MCF 10A (cell line): ENCODE measurements at regions of chr3 and their contacts with region 1.

Region 1: DNA sequence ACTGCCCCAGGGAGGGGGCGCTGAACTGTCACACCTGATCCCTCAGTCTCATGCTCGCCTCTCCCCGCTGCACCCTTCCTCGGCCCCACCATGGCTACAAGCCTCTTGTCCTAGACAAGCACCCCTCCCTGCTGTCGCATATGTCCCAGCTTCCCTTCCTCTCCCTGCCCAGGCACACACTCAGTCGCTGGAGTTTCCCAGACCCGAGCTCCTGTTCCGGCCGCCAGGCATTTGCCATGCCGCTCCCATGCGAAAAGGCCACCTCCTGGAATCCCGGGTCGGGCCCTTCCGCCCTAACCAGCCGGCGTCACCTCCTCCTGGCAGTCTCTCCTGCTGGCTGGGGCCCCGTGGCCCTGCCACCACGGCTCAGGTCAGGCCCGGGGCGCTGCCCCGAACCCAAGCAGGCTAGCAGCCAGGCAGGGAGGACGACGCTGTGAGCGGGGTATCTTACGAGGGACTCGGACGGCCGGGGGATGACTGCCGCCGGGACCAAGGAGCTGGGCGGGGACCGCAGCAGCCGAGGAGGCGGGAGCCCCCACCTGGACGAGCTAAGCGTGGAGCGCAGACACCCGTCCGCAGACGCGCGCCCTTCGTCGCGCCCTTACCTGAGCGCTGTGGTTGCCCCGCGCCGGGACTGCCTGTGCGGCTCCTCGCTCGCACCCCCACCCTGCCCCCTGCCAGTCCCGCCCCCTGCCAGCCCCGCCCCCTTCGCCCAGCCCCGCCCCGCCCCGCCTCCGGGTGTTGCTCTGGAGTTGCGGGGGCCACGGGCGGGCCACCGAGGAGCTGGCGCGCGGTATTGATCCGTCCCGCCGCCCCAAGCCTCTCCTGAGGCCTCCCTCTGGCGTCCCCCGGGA is at the start of gene ALS2CL:
- DNase-seq: peak; percentile 64
- H3K4me3 Mint-ChIP-seq: peak within 1 kb of the TSS; percentile 84
- H3K27ac Mint-ChIP-seq: peak within 1 kb of the TSS; percentile 94
- H3K4me1 Mint-ChIP-seq: peaks cover 49% of the 10 kb centered on the region
- H3K27me3 Mint-ChIP-seq: no peaks in the 10 kb centered on the region
- CTCF ChIP-seq: no peak
- total RNA-seq, gene ALS2CL: 93.6 and 95.5 TPM in 2 replicates

Region 2: DNA sequence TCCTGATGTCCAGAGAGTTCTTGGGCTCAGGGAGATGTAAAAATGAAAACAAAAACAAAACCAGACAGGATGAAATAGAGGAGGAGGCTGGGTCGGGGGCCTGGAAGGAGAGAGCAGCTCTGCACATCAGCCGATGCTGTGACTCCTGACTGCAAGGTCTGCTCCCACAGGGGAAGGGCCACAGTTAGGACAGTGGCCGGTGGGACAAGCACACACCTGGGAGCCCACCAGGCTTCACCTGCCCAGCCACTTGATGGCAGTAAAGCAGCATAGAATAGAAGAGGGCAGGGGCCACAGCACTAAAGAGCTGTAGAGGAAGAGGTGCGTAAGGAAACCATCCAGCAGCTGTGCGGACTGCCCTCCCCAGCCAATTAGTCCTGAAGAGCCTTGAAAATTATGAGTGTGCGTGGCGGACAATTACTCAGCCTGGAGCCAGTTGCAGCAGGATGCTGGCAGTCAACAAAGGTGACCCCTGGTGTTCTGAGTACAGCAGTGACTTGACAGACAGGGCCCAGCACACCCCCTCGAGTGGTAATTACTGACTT is 29.6 kb before region 1 on chr3:
- CTCF ChIA-PET with region 1: no interaction called
- POLR2A ChIA-PET with region 1: interaction called, 27 read pairs
- intact Hi-C with region 1: no loop called
- DNase-seq: peak; percentile 30
- H3K4me3 Mint-ChIP-seq: no peak overlapping the region
- H3K27ac Mint-ChIP-seq: no peak overlapping the region
- H3K4me1 Mint-ChIP-seq: peaks cover 33% of the 10 kb centered on the region
- H3K27me3 Mint-ChIP-seq: no peaks in the 10 kb centered on the region
- CTCF ChIP-seq: peak; percentile 19

Region 3: DNA sequence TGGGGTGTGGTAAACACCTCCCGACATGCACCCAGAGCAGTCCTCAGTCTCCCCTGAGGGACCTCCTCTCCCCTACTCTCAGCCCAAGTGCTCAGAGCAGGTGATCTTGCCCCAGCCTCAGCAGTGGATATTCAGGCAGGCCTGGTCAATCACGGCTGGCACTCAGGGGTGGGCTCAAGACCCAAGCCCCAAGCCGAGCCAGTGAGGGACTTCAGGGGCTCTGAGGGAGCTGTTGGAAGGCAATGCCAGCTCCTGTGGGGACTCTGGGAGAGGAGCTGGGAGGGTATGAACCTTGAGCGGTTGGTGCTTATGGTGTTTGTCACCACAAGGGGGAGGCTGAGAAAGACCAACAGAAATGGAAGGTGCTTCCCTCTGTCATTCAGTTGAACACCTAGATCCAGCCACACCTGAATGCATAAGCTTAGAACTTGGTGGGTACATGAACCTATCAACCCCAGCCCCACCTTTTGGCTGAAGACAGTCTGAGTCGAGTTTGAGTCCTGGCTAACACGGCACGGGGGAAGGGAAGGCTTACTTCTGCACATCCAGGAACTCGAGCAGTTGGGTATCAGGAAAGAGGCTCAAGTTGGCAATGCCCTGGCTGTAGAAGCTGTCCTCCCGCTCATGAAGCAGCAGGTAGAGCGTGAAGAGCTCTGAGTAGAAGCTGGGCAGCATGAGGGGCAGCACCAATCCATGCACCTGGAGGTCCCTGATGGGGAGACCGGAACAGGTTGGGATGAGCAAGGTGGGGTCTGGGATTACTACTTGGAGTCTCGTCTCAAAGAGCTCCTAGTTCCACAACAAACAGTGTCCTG is 19.0 kb before region 1 on chr3:
- CTCF ChIA-PET with region 1: no interaction called
- POLR2A ChIA-PET with region 1: interaction called, 27 read pairs
- intact Hi-C with region 1: no loop called
- DNase-seq: no peak
- H3K4me3 Mint-ChIP-seq: no peak overlapping the region
- H3K27ac Mint-ChIP-seq: no peak overlapping the region
- H3K4me1 Mint-ChIP-seq: no peaks in the 10 kb centered on the region
- H3K27me3 Mint-ChIP-seq: no peaks in the 10 kb centered on the region
- CTCF ChIP-seq: peak; percentile 11

Region 4: GRCh38 chr3:46860017-46860830 is 167.0 kb after region 1 on chr3:
- CTCF ChIA-PET with region 1: no interaction called
- POLR2A ChIA-PET with region 1: no interaction called
- intact Hi-C with region 1: no loop called
- DNase-seq: peak; percentile 37
- H3K4me3 Mint-ChIP-seq: no peak overlapping the region
- H3K27ac Mint-ChIP-seq: no peak overlapping the region
- H3K4me1 Mint-ChIP-seq: peaks cover 9% of the 10 kb centered on the region
- H3K27me3 Mint-ChIP-seq: peaks cover 34% of the 10 kb centered on the region
- CTCF ChIP-seq: peak; percentile 32